Activated naive CD4-positive, alpha-beta T cell treated with anti-CD3 and anti-CD28 coated beads for 36 hours (primary cell): ENCODE measurements at regions of chr17 and their contacts with region 1.

Region 1: GRCh38 chr17:46995841-46996571 is 17.0 kb upstream of the RPRML start:
- DNase-seq: no peak
- H3K4me3 Mint-ChIP-seq: no peak overlapping the region
- H3K27ac Mint-ChIP-seq: no peak overlapping the region
- H3K4me1 Mint-ChIP-seq: no peaks in the 10 kb centered on the region
- H3K27me3 Mint-ChIP-seq: no peaks in the 10 kb centered on the region

Region 2: DNA sequence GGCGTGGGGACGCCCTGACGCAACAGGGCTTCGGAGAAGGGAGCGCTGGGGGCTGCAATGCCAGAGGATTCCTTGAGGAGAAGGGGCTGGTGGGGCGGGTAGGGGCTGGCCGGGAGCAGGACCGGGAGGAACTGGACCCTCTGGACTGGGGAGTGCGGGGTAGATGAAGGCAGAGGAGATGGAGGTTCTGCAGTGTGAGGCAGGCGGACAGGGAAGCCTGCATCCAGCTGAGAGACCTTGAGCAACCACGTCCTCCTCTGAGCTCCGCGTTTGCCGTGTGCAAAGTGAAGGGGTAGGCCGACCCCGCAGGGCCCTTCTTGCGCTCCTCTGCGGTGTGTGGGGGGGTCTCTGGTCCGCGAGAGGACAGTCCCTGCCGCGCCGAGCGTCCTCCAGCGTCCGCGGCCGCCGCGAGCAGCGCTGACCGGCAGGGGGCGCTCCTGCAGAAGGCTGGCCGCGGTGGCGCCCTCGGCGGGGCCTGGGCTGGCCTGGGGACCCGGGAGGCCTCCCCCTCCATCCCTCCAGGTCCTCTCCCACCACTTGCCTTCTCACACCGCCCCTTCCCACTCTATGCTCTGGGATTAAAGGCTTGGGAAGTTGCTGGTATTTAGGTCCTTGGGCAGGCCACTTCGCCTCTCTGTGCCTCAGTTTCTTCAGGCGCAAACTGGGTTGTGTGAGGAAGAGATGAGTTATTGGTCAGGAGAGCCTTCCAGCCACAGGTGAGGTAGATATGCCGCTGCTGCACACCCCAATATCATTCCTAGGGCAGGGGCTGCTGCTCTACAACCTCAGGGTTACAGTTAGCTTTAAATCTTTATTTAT is 154.2 kb before region 1 on chr17:
- CTCF ChIA-PET with region 1: interaction called, 9 read pairs
- intact Hi-C with region 1: loop called (anchors 2 kb)
- DNase-seq: no peak
- H3K4me3 Mint-ChIP-seq: no peak overlapping the region
- H3K27ac Mint-ChIP-seq: no peak overlapping the region
- H3K4me1 Mint-ChIP-seq: no peaks in the 10 kb centered on the region
- H3K27me3 Mint-ChIP-seq: peaks cover 38% of the 10 kb centered on the region